Activated CD4-positive, alpha-beta T cell treated with anti-CD3 and anti-CD28 coated beads for 36 hours (primary cell): ENCODE measurements at regions of chr1 and their contacts with region 1.

Region 1: GRCh38 chr1:244864253-244865027 is at the start of gene HNRNPU:
- DNase-seq: peak; percentile 98
- ATAC-seq: peak; percentile 72
- H3K4me3 Mint-ChIP-seq: peak within 1 kb of the TSS; percentile 100
- H3K27ac Mint-ChIP-seq: peak within 1 kb of the TSS; percentile 99
- H3K4me1 Mint-ChIP-seq: peaks cover 33% of the 10 kb centered on the region
- H3K27me3 Mint-ChIP-seq: no peaks in the 10 kb centered on the region
- total RNA-seq, gene HNRNPU: 521 to 532 TPM

Region 2: DNA sequence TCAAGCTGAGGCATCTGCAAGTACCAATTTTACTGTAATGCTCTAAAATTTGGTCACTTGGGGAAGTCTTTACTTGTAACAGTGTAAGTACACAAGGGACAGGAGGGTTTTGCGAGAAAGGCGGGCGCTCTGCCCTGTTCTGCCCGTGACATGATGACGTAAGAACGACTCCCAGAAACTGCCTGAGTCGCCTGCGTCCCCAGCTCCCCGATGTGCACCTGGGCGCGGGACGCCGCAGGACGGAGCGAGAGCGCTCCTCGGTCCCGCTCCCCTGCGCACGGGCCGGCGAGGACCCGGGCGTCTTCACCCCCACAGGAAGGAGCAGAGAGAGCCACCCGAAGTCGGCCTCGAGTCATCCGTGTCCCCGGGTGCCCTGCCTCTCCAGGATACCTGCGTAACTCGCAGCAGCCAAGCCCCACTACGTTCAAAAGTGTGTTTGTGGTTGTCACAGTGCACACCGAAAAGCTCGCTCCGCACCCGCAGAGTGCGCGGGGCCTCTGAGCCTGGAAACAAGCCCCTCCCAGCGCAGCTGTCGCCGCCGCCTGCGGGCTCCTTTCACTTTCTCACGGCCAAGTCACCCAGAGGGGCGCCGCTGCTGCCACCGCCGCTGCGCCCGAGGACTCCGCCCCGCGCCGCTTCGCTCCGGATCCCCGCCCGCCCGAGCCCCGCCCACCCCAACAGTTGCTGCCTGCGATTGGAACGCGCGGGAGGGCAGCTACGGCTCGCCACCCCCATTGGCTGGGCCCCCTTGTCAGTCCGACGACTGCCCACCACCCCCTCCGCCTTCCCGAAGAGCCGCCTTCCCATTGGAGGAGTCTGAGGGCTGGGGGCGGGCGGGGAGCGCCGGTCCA is 816.6 kb before region 1 on chr1:
- CTCF ChIA-PET with region 1: no interaction called
- POLR2A ChIA-PET with region 1: no interaction called
- intact Hi-C with region 1: loop called in 1 of 2 experiments (anchors 2 kb)
- DNase-seq: peak; percentile 98
- ATAC-seq: peak; percentile 92
- H3K4me3 Mint-ChIP-seq: peak overlapping the region; percentile 93
- H3K27ac Mint-ChIP-seq: peak overlapping the region; percentile 97
- H3K4me1 Mint-ChIP-seq: peaks cover 35% of the 10 kb centered on the region
- H3K27me3 Mint-ChIP-seq: no peaks in the 10 kb centered on the region

Region 3: GRCh38 chr1:244652699-244653466 is 211.6 kb before region 1 on chr1 and contains the start of gene DESI2:
- CTCF ChIA-PET with region 1: interaction called, 3 read pairs
- POLR2A ChIA-PET with region 1: no interaction called
- intact Hi-C with region 1: loop called (anchors 1 kb)
- DNase-seq: peak; percentile 98
- ATAC-seq: peak; percentile 96
- H3K4me3 Mint-ChIP-seq: peak within 1 kb of the TSS; percentile 76
- H3K27ac Mint-ChIP-seq: peak within 1 kb of the TSS; percentile 95
- H3K4me1 Mint-ChIP-seq: peaks cover 19% of the 10 kb centered on the region
- H3K27me3 Mint-ChIP-seq: no peaks in the 10 kb centered on the region
- total RNA-seq, gene DESI2: 24.5 to 26.0 TPM

Region 4: GRCh38 chr1:244918421-244919319 is 54.2 kb after region 1 on chr1:
- CTCF ChIA-PET with region 1: interaction called, 4 read pairs
- POLR2A ChIA-PET with region 1: interaction called, 5 read pairs
- intact Hi-C with region 1: loop called (anchors 1 to 2 kb)
- DNase-seq: peak; percentile 66
- ATAC-seq: peak; percentile 86
- H3K4me3 Mint-ChIP-seq: peak overlapping the region; percentile 73
- H3K27ac Mint-ChIP-seq: peak overlapping the region; percentile 80
- H3K4me1 Mint-ChIP-seq: peaks cover 16% of the 10 kb centered on the region
- H3K27me3 Mint-ChIP-seq: peaks cover 3% of the 10 kb centered on the region

Region 5: DNA sequence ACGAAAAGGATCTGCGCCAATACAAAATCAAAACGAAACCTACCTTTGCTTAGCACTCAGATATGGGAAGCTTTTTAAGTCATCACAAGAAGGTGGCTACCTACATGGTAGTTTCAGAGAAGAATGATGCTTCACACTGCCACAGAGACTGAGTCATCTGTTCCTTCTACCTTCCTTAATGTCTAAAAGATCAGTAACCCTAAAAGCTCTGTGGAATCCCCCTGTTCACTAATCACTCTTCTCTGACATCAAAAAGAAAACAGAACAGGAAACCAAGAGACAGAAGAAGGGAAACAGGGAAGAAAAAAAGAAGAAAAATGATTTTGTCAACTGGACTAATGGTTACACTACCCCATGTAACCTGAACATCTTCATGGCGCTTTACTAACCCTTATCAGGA is 1465.5 kb after region 1 on chr1:
- CTCF ChIA-PET with region 1: no interaction called
- POLR2A ChIA-PET with region 1: no interaction called
- intact Hi-C with region 1: loop called in 1 of 2 experiments (anchors 5 kb)
- DNase-seq: peak; percentile 60
- ATAC-seq: peak; percentile 92
- H3K4me3 Mint-ChIP-seq: peak overlapping the region; percentile 3
- H3K27ac Mint-ChIP-seq: peak overlapping the region; percentile 63
- H3K4me1 Mint-ChIP-seq: peaks cover 51% of the 10 kb centered on the region
- H3K27me3 Mint-ChIP-seq: no peaks in the 10 kb centered on the region